ENCODE measurements at regions of chr1 and their contacts with region 1.

Region 1: GRCh38 chr1:113904674-113905434 is at the starts of genes AP4B1 and DCLRE1B:
- DNase-seq: peak; percentile 99
- H3K4me3 Mint-ChIP-seq: peak within 1 kb of the TSS; percentile 95
- H3K27ac Mint-ChIP-seq: peak within 1 kb of the TSS; percentile 94
- H3K4me1 Mint-ChIP-seq: no peaks in the 10 kb centered on the region
- H3K27me3 Mint-ChIP-seq: no peaks in the 10 kb centered on the region
- CTCF ChIP-seq: peak; percentile 49
- total RNA-seq, gene AP4B1: 20.4 and 21.3 TPM in 2 replicates
- total RNA-seq, gene DCLRE1B: 6.9 and 8.1 TPM in 2 replicates

Region 2: GRCh38 chr1:113452921-113453770 is 451.7 kb before region 1 on chr1:
- CTCF ChIA-PET with region 1: no interaction called
- POLR2A ChIA-PET with region 1: no interaction called
- intact Hi-C with region 1: loop called (anchors 10 kb)
- DNase-seq: peak; percentile 65
- H3K4me3 Mint-ChIP-seq: no peak overlapping the region
- H3K27ac Mint-ChIP-seq: peak overlapping the region; percentile 65
- H3K4me1 Mint-ChIP-seq: peaks cover 45% of the 10 kb centered on the region
- H3K27me3 Mint-ChIP-seq: no peaks in the 10 kb centered on the region
- CTCF ChIP-seq: peak; percentile 44

Region 3: GRCh38 chr1:113811888-113812660 is 92.8 kb before region 1 on chr1 and contains the start of gene RSBN1:
- CTCF ChIA-PET with region 1: interaction called, 4 read pairs
- POLR2A ChIA-PET with region 1: interaction called, 48 read pairs
- intact Hi-C with region 1: loop called (anchors 1 kb)
- DNase-seq: peak; percentile 99
- H3K4me3 Mint-ChIP-seq: peak within 1 kb of the TSS; percentile 94
- H3K27ac Mint-ChIP-seq: peak within 1 kb of the TSS; percentile 88
- H3K4me1 Mint-ChIP-seq: peaks cover 22% of the 10 kb centered on the region
- H3K27me3 Mint-ChIP-seq: no peaks in the 10 kb centered on the region
- CTCF ChIP-seq: no peak
- total RNA-seq, gene RSBN1: 11.8 and 15.7 TPM in 2 replicates

Region 4: DNA sequence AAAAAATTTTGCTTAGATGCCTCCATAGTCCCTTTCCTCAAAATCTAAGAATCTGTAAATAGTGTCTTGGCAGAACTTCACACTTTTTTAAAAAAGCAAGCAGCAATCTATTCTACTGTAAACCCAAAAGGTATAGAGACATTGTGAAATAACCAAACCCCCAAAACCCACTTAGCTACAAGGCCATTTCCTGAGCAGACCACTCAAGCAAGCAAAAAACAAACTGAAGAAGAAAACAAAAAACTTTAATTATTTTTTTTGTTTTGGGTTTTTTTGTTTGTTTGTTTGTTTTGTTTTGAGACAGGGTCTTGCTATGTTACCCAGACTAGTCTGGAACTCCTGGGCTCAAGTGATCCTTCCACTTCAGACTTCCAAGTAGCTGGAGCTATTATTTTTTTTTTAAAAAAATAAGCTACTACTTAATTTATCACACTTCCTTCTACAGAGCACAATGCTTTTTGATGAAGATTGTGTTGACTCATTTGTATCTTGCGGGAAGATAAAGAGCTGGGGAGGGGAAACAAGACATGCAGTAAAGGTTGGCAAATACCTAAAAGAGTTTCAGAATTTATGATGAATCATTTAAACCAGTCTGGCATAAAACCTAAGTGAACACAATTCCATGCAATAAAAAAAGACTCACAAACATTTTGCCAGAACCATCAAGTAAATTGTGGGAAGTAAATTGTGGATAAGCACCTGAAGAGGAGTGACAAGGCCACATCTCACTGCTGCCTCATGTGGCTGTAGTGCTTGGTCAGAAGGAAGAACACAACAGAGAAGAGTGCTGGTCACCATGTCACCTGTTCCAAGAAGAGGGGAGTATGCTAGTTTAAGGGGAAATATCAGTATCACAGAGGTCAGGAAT is 30.6 kb before region 1 on chr1:
- CTCF ChIA-PET with region 1: interaction called, 5 read pairs
- POLR2A ChIA-PET with region 1: interaction called, 14 read pairs
- intact Hi-C with region 1: no loop called
- DNase-seq: peak; percentile 44
- H3K4me3 Mint-ChIP-seq: no peak overlapping the region
- H3K27ac Mint-ChIP-seq: no peak overlapping the region
- H3K4me1 Mint-ChIP-seq: peaks cover 6% of the 10 kb centered on the region
- H3K27me3 Mint-ChIP-seq: no peaks in the 10 kb centered on the region
- CTCF ChIP-seq: peak; percentile 20

Measured in MCF 10A (cell line).